ENCODE measurements at regions of chr6 and their contacts with region 1.

Region 1: GRCh38 chr6:30828027-30828960 is 56.0 kb upstream of the DDR1 start:
- DNase-seq: peak; percentile 94
- H3K4me3 Mint-ChIP-seq: peak overlapping the region; percentile 75
- H3K27ac Mint-ChIP-seq: peak overlapping the region; percentile 95
- H3K4me1 Mint-ChIP-seq: peaks cover 66% of the 10 kb centered on the region
- H3K27me3 Mint-ChIP-seq: no peaks in the 10 kb centered on the region

Region 2: DNA sequence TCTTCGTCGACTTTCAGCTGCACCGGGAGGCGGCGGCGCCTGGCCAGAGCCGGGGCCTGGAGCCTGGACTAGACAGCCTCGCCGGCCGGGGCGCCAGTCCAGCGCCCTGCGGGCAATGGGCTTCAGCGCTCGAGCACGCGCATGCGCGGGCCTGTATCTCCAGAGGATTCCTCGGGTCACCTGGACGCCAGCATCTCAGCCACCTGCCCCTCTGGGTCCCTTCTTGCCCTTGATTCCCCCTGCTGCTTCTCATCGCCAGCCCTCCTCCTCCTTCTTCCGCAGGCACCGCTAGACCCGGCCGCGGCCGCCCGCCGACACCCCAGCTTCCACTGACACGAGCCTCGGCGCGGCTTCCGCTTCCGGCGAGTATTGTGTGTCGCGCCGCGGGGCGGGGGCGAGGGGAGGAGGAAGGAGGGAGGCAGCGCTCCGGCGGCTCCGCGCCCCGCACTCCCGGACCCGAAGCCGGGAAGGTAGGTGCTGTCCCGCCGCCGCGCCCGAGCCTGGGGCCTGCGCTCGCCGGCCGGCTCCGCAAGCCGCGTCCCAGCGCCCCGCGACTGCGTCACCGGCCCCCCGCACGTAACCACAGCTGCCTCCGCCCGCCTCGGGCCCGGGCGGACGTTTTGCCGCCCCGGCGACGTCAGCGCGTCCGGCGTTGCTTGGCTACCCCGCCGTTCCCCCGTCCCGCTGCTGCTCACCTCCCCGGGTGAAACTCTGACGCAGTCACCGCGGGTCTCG is 501.6 kb before region 1 on chr6 and contains the start of gene TRIM39:
- CTCF ChIA-PET with region 1: no interaction called
- intact Hi-C with region 1: no loop called
- DNase-seq: peak; percentile 87
- H3K4me3 Mint-ChIP-seq: peak within 1 kb of the TSS; percentile 96
- H3K27ac Mint-ChIP-seq: peak within 1 kb of the TSS; percentile 97
- H3K4me1 Mint-ChIP-seq: peaks cover 49% of the 10 kb centered on the region
- H3K27me3 Mint-ChIP-seq: no peaks in the 10 kb centered on the region
- total RNA-seq, gene TRIM39: 14.2 to 14.5 TPM

Region 3: GRCh38 chr6:30483677-30484279 is 344.5 kb before region 1 on chr6:
- CTCF ChIA-PET with region 1: no interaction called
- intact Hi-C with region 1: loop called (anchors 5 kb)
- DNase-seq: peak; percentile 54
- H3K4me3 Mint-ChIP-seq: no peak overlapping the region
- H3K27ac Mint-ChIP-seq: no peak overlapping the region
- H3K4me1 Mint-ChIP-seq: peaks cover 44% of the 10 kb centered on the region
- H3K27me3 Mint-ChIP-seq: peaks cover 35% of the 10 kb centered on the region

Region 4: GRCh38 chr6:30730601-30731435 is 97.5 kb before region 1 on chr6:
- CTCF ChIA-PET with region 1: interaction called, 34 read pairs
- intact Hi-C with region 1: no loop called
- DNase-seq: peak; percentile 94
- H3K4me3 Mint-ChIP-seq: peak overlapping the region; percentile 29
- H3K27ac Mint-ChIP-seq: no peak overlapping the region
- H3K4me1 Mint-ChIP-seq: peaks cover 47% of the 10 kb centered on the region
- H3K27me3 Mint-ChIP-seq: no peaks in the 10 kb centered on the region

Region 5: GRCh38 chr6:30763302-30764193 is 64.7 kb before region 1 on chr6:
- CTCF ChIA-PET with region 1: interaction called, 28 read pairs
- intact Hi-C with region 1: no loop called
- DNase-seq: no peak
- H3K4me3 Mint-ChIP-seq: no peak overlapping the region
- H3K27ac Mint-ChIP-seq: peak overlapping the region; percentile 83
- H3K4me1 Mint-ChIP-seq: peaks cover 59% of the 10 kb centered on the region
- H3K27me3 Mint-ChIP-seq: no peaks in the 10 kb centered on the region

Region 6: GRCh38 chr6:30844091-30844535 is 15.8 kb after region 1 on chr6:
- CTCF ChIA-PET with region 1: interaction called, 10 read pairs
- intact Hi-C with region 1: no loop called
- DNase-seq: no peak
- H3K4me3 Mint-ChIP-seq: no peak overlapping the region
- H3K27ac Mint-ChIP-seq: no peak overlapping the region
- H3K4me1 Mint-ChIP-seq: peaks cover 18% of the 10 kb centered on the region
- H3K27me3 Mint-ChIP-seq: no peaks in the 10 kb centered on the region

Region 7: GRCh38 chr6:30883685-30884520 is 55.6 kb after region 1 on chr6 and contains the start of gene DDR1:
- CTCF ChIA-PET with region 1: interaction called, 34 read pairs
- intact Hi-C with region 1: no loop called
- DNase-seq: peak; percentile 47
- H3K4me3 Mint-ChIP-seq: peak within 1 kb of the TSS; percentile 80
- H3K27ac Mint-ChIP-seq: peak within 1 kb of the TSS; percentile 48
- H3K4me1 Mint-ChIP-seq: peaks cover 32% of the 10 kb centered on the region
- H3K27me3 Mint-ChIP-seq: no peaks in the 10 kb centered on the region
- total RNA-seq, gene DDR1: 9.5 to 10.1 TPM

Region 8: GRCh38 chr6:31079656-31080261 is 251.5 kb after region 1 on chr6:
- CTCF ChIA-PET with region 1: interaction called, 14 read pairs
- intact Hi-C with region 1: loop called (anchors 2 kb)
- DNase-seq: peak; percentile 86
- H3K4me3 Mint-ChIP-seq: peak overlapping the region; percentile 32
- H3K27ac Mint-ChIP-seq: no peak overlapping the region
- H3K4me1 Mint-ChIP-seq: peaks cover 8% of the 10 kb centered on the region
- H3K27me3 Mint-ChIP-seq: no peaks in the 10 kb centered on the region